Activated naive CD4-positive, alpha-beta T cell treated with anti-CD3 and anti-CD28 coated beads, Interleukin-2, amount 10 ng/mL, durations not matched to agents 7 days and 5 days (primary cell): ENCODE measurements at regions of chr11 and their contacts with region 1.

Region 1: DNA sequence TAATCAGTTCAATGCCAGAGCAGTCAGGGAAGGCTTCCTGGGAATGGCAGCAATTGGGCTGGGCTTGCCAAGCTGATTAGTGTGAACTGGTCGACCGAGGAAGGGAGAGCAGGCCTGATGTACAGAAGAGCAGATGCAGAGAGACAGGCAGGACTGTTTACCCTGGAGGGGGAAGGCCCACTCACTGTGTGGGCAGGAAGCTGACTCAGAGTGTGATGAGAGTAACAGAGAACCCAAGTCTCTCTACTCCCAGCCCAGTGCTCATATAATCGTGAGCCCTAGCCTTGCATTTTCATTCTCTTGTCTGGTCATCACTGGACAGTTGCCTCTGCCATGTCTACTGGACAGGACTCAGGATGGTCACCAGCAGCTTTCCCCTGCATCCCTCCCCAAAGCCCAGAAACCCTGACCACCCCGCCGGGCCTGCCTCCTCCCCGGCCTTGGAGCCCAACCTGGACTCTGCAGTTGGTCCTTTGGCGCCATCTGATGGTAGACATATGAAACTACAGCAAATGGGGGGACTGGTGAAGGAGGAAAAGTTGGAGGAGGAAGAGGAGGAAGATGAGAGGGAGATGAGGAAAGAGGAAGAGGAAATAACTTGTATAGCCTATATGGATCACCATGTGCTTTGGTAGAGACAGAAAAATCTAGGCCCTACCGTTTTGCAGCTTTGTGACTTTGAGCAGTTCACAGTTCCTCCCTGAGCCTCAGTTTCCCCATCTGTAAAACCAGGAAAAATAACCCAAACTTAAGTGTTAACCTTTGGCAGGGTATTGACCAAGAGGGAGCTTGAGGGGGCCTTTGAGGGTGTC is 43.4 kb upstream of the PRDM11 start:
- DNase-seq: peak; percentile 60
- H3K4me3 Mint-ChIP-seq: peak overlapping the region; percentile 45
- H3K27ac Mint-ChIP-seq: peak overlapping the region; percentile 57
- H3K4me1 Mint-ChIP-seq: peaks cover 11% of the 10 kb centered on the region
- H3K27me3 Mint-ChIP-seq: peaks cover 52% of the 10 kb centered on the region

Region 2: GRCh38 chr11:44927174-44927661 is 175.8 kb before region 1 on chr11:
- CTCF ChIA-PET with region 1: interaction called, 272 read pairs
- DNase-seq: peak; percentile 68
- H3K4me3 Mint-ChIP-seq: no peak overlapping the region
- H3K27ac Mint-ChIP-seq: no peak overlapping the region
- H3K4me1 Mint-ChIP-seq: no peaks in the 10 kb centered on the region
- H3K27me3 Mint-ChIP-seq: no peaks in the 10 kb centered on the region

Region 3: GRCh38 chr11:44943118-44943517 is 159.9 kb before region 1 on chr11:
- CTCF ChIA-PET with region 1: interaction called, 382 read pairs
- DNase-seq: no peak
- H3K4me3 Mint-ChIP-seq: no peak overlapping the region
- H3K27ac Mint-ChIP-seq: no peak overlapping the region
- H3K4me1 Mint-ChIP-seq: peaks cover 4% of the 10 kb centered on the region
- H3K27me3 Mint-ChIP-seq: peaks cover 49% of the 10 kb centered on the region

Region 4: DNA sequence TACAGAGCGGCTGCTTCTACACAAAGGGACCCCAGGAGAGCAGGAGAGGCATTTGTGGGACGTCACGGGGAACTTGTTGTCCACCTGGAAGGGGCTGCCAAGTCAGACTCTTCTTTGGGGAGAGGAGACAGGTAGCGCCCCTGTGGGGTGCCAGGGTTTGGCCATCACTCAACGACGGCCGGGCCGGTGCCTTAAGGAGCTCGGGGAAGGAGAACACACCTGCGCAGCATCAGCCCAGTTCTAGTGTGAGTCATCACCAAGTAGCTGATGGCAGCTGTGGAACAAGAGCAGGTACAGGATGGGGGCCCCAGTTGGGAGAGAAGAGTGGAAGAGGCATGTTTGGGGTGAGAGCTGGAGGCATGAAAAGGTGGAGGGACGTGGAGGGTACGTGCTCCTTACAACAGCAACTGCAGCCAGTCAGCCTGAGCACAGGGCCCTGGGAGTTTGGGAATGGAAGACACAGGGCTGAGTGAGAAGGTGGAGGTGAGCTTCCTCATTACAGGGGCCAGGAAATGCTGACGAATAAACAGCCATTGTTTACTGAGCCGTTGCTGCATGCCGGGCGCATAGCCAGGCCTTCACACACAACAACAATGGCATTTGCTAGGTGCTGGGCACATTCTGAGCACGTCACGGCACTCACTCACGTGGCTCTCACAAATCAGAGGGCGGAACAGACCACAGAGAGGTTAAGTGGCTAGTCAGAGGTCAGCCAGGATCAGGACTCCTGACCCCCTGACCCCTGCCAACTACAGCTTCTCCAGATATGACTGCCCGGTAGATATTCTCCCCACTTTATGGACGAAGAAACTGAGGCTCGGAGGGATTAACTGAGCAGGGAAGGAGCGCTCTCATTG is 123.2 kb before region 1 on chr11:
- CTCF ChIA-PET with region 1: interaction called, 11 read pairs
- DNase-seq: no peak
- H3K4me3 Mint-ChIP-seq: no peak overlapping the region
- H3K27ac Mint-ChIP-seq: no peak overlapping the region
- H3K4me1 Mint-ChIP-seq: peaks cover 7% of the 10 kb centered on the region
- H3K27me3 Mint-ChIP-seq: peaks cover 9% of the 10 kb centered on the region

Region 5: DNA sequence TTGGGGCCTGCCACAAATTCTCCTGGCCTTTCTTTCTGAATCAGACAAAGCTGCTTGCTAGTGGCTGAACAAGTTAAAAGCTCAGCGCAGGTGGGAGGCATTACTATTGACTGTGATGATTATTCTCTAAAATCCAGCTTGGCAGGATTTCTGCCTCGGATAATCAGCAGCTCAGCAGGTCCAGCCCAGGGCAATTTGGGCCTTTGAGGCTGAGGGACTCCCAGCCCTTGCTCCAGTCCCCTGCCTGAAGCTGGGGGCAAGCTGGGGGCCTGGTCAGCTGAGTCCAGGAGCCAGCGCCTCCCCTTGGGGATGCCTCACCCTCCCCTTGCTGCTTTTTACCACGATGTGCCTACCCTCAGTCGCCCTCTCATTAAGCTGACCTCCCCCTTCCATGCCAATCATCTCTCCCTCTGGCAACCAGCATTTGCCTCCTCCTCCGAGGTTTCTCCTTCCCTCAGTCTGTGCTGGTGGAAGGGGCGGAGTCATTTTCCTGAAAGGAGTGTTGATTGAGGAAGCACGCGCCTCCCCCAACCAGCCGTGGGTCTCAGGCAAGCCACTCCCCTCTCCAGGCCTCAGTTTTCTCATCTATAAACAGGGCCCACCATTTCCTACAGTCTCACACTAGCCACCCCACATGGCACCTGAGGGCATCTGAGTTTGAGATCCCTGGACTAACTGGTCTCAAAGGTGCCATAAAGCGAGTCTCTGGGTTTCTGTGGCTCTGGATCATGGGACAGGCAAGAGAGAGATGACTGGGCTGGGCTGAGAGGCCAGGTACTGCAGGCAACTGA is 17.1 kb before region 1 on chr11:
- CTCF ChIA-PET with region 1: interaction called, 41 read pairs
- DNase-seq: no peak
- H3K4me3 Mint-ChIP-seq: no peak overlapping the region
- H3K27ac Mint-ChIP-seq: no peak overlapping the region
- H3K4me1 Mint-ChIP-seq: peaks cover 5% of the 10 kb centered on the region
- H3K27me3 Mint-ChIP-seq: peaks cover 18% of the 10 kb centered on the region